Right lobe of liver (tissue), 6 donors: ENCODE measurements at regions of chr17 and their contacts with region 1.

Region 1: DNA sequence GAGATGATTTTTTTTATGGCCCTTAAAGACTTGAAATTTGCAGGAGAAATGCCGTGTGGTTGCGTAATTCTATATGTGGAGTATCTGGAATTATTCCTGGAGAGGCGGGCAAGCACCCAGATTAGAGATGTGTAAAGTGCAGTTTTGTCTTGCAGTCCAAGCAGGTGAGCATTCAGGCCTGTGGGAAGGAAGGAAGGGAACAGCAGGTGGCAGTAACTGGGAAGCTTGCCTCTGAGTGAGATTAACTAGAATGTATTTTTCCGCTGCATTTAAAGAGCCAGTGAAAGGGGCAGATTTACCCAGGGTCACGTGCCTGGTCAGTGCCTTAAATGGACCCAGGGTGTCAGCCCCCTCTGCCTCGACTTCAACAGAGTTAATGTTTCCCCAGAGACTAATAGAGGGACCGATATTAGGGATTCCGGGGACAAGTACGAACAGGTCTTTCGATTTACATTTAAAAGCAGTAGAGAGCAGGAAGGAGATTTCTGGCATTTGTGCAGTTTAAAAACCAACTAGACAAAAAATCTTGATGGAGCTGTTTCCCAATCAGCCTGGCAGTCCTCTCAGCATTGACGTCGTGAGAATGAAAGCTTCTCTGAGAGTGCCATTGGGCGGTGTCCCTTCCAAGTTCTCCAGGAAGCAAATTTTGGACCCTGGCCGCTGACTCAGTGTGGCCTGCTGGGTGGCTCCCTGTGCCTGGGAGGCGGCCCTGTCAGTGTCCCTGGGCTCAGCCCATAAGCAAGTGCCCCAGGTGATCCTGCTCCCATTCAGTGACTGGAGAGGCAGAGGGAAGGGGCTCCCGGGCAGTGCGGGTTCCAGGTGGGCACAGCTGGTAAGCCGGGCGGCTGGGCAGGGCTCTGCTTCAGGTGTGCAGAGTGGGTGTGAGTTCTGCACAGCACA is 38.2 kb downstream of the KSR1 start:
- DNase-seq: peak; percentile 89 to 93 (median 90)
- ATAC-seq: peak; percentile 90 to 95 (median 90)
- H3K4me3 ChIP-seq: peak overlapping the region; percentile 12 to 44 (median 44)
- H3K27ac ChIP-seq: peak overlapping the region; percentile 78 to 87 (median 79)
- H3K4me1 ChIP-seq: peaks cover 0 to 33% (median 17%) of the 10 kb centered on the region in 4 donors
- H3K27me3 ChIP-seq: no peaks in the 10 kb centered on the region
- CTCF ChIP-seq: peak; percentile 51 to 62 (median 58)
- POLR2A ChIP-seq: peak; percentile 74

Region 2: DNA sequence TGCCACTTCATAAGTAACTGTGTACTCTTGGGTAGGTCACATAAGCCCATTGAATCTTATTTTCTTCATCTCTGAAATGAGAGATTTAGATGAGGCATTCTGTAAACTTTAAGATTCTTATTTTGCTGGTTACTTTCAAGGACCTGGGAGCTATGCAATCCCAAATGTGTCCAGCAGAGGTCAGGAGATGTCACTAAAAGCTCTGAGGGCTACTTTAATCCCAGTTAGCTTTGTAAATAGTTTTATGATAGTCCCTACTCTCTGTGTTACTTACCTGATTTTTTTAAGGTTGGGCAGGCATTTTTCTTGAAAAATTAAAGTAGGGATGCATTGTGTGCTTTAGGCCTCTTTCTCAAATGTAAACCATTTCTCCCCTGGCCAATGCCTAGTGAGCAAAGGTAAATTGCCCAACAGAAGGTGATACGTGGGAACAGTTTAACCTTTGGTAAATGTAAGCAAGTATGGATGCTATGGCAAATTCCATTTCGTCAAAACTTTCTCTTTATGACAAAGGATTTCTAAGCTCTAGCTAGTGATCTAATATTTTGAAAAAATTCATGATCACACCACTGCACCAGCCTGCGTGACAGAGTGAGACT is 257.6 kb before region 1 on chr17:
- intact Hi-C with region 1: loop called in 1 of 2 experiments (anchors 10 kb)
- DNase-seq: peak in 1 of 3 donors; percentile 64
- ATAC-seq: peak; percentile 88 to 94 (median 91)
- H3K4me3 ChIP-seq: no peak overlapping the region
- H3K27ac ChIP-seq: no peak overlapping the region
- H3K4me1 ChIP-seq: no peaks in the 10 kb centered on the region
- H3K27me3 ChIP-seq: no peaks in the 10 kb centered on the region
- CTCF ChIP-seq: peak; percentile 91 to 98 (median 94)
- POLR2A ChIP-seq: no peak